Activated CD8-positive, alpha-beta T cell treated with anti-CD3 and anti-CD28 coated beads, Interleukin-2, amount 10 ng/mL, durations not matched to agents 7 days and 5 days (primary cell): ENCODE measurements at regions of chr6 and their contacts with region 1.

Region 1: DNA sequence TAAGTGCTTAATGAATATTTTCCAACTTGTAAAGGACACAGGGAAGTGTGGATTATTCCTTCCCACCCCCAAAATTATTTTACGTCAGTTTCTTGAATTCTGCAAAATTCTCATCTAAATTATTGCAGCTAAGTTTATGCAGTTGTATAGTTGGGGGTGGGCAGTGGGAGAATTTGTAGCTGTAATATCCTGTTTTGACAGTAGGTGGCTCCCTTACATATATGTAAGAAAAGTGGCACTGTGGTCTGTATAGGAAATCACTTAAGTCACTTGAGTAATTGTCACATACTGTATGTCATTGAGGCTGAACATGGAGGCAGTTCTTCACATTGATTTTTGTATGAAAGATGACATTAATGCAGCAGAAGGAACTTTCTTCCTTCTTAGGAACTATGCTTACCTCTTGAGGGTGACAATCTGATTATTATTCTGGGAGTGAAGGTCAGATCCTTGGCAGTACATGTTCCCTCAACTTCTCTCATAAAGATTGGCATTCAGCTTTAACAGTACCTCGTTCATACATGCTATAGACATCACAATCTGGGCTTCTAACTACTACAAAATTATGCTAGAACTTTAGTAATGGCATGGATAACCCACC is 14.7 kb upstream of the CFAP206 start:
- DNase-seq: peak; percentile 52
- ATAC-seq: peak; percentile 89
- H3K4me3 Mint-ChIP-seq: no peak overlapping the region
- H3K27ac Mint-ChIP-seq: no peak overlapping the region
- H3K4me1 Mint-ChIP-seq: peaks cover 2% of the 10 kb centered on the region
- H3K27me3 Mint-ChIP-seq: no peaks in the 10 kb centered on the region

Region 2: GRCh38 chr6:87139236-87139635 is 253.9 kb before region 1 on chr6:
- CTCF ChIA-PET with region 1: interaction called, 15 read pairs
- POLR2A ChIA-PET with region 1: no interaction called
- DNase-seq: peak; percentile 64
- ATAC-seq: peak; percentile 76
- H3K4me3 Mint-ChIP-seq: no peak overlapping the region
- H3K27ac Mint-ChIP-seq: no peak overlapping the region
- H3K4me1 Mint-ChIP-seq: no peaks in the 10 kb centered on the region
- H3K27me3 Mint-ChIP-seq: peaks cover 48% of the 10 kb centered on the region

Region 3: GRCh38 chr6:87407901-87408720 is 15.0 kb after region 1 on chr6 and contains the start of gene CFAP206:
- CTCF ChIA-PET with region 1: interaction called, 12 read pairs
- POLR2A ChIA-PET with region 1: no interaction called
- DNase-seq: peak; percentile 84
- ATAC-seq: peak; percentile 89
- H3K4me3 Mint-ChIP-seq: peak within 1 kb of the TSS; percentile 75
- H3K27ac Mint-ChIP-seq: peak within 1 kb of the TSS; percentile 67
- H3K4me1 Mint-ChIP-seq: peaks cover 7% of the 10 kb centered on the region
- H3K27me3 Mint-ChIP-seq: peaks cover 28% of the 10 kb centered on the region
- total RNA-seq, gene CFAP206: not detected